ENCODE measurements at regions of chr1 and their contacts with region 1.

Region 1: GRCh38 chr1:114282751-114283403 is 129.2 kb upstream of the SYT6 start:
- DNase-seq: peak; percentile 90
- ATAC-seq: peak; percentile 100
- H3K4me3 Mint-ChIP-seq: no peak overlapping the region
- H3K27ac Mint-ChIP-seq: no peak overlapping the region
- H3K4me1 Mint-ChIP-seq: no peaks in the 10 kb centered on the region
- H3K27me3 Mint-ChIP-seq: peaks cover 3% of the 10 kb centered on the region

Region 2: GRCh38 chr1:113978863-113979702 is 303.8 kb before region 1 on chr1 and contains the start of gene OLFML3:
- CTCF ChIA-PET with region 1: interaction called, 40 read pairs
- DNase-seq: peak; percentile 76
- ATAC-seq: no peak
- H3K4me3 Mint-ChIP-seq: no peak within 1 kb of the TSS
- H3K27ac Mint-ChIP-seq: no peak within 1 kb of the TSS
- H3K4me1 Mint-ChIP-seq: peaks cover 46% of the 10 kb centered on the region
- H3K27me3 Mint-ChIP-seq: no peaks in the 10 kb centered on the region
- total RNA-seq, gene OLFML3: 0.26 to 0.29 TPM

Region 3: GRCh38 chr1:114263343-114263742 is 19.5 kb before region 1 on chr1:
- CTCF ChIA-PET with region 1: interaction called, 13 read pairs
- DNase-seq: no peak
- ATAC-seq: peak; percentile 39
- H3K4me3 Mint-ChIP-seq: no peak overlapping the region
- H3K27ac Mint-ChIP-seq: no peak overlapping the region
- H3K4me1 Mint-ChIP-seq: no peaks in the 10 kb centered on the region
- H3K27me3 Mint-ChIP-seq: no peaks in the 10 kb centered on the region

Region 4: GRCh38 chr1:114272593-114272992 is 10.3 kb before region 1 on chr1:
- CTCF ChIA-PET with region 1: interaction called, 19 read pairs
- DNase-seq: no peak
- ATAC-seq: no peak
- H3K4me3 Mint-ChIP-seq: no peak overlapping the region
- H3K27ac Mint-ChIP-seq: no peak overlapping the region
- H3K4me1 Mint-ChIP-seq: peaks cover 4% of the 10 kb centered on the region
- H3K27me3 Mint-ChIP-seq: peaks cover 26% of the 10 kb centered on the region

Region 5: GRCh38 chr1:114295321-114295720 is 12.4 kb after region 1 on chr1:
- CTCF ChIA-PET with region 1: interaction called, 12 read pairs
- DNase-seq: no peak
- ATAC-seq: no peak
- H3K4me3 Mint-ChIP-seq: no peak overlapping the region
- H3K27ac Mint-ChIP-seq: no peak overlapping the region
- H3K4me1 Mint-ChIP-seq: no peaks in the 10 kb centered on the region
- H3K27me3 Mint-ChIP-seq: peaks cover 8% of the 10 kb centered on the region

Region 6: DNA sequence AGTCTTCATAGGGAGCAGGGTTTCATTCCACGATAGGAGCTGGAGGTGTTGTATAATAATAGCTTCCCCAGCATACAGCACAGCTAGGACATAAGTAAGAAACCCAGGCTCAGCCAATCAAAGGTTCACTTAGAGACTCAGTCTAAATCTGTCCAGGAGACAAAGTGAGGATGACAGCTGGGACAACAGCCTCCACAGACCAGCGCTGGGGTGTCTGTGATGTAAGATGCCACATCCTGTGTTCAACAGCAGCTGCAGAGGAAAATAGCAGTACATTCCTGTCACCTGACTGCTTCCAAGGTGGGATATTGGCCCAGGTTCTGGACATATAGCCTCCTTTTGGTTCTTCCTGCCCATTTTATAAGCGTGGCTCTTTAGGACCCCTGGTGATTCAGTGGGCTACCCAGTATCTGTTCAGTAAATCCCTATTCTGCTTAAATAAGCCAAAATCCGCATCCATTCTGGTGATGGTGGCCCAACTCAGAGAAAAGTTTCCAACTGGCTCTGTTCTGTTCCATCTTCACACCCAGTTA is 47.6 kb after region 1 on chr1:
- CTCF ChIA-PET with region 1: interaction called, 11 read pairs
- DNase-seq: peak; percentile 78
- ATAC-seq: peak; percentile 84
- H3K4me3 Mint-ChIP-seq: no peak overlapping the region
- H3K27ac Mint-ChIP-seq: peak overlapping the region; percentile 6
- H3K4me1 Mint-ChIP-seq: peaks cover 58% of the 10 kb centered on the region
- H3K27me3 Mint-ChIP-seq: peaks cover 6% of the 10 kb centered on the region

Region 7: GRCh38 chr1:114346480-114347029 is 63.7 kb after region 1 on chr1:
- CTCF ChIA-PET with region 1: interaction called, 16 read pairs
- DNase-seq: peak; percentile 97
- ATAC-seq: peak; percentile 98
- H3K4me3 Mint-ChIP-seq: peak overlapping the region; percentile 70
- H3K27ac Mint-ChIP-seq: peak overlapping the region; percentile 96
- H3K4me1 Mint-ChIP-seq: peaks cover 39% of the 10 kb centered on the region
- H3K27me3 Mint-ChIP-seq: no peaks in the 10 kb centered on the region

Region 8: DNA sequence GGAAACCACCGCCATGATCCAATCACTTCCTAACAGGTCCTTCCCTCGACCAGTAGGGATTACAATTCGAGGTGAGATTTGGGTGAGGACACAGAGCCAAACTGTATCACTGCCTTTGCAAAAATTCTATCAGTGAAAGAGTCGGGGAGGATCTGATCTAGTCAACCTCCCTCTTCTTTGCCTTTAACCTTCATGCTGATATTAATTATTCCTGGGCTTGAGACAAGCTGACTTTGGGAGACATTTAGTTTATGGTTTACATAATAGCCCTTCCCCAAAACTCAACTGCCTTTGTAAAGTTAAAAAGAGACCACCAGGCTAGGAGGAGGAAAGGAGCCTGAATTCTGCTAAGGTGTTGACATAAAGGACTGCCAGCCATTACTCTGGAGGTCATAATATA is 135.4 kb after region 1 on chr1:
- CTCF ChIA-PET with region 1: no interaction called
- DNase-seq: no peak
- ATAC-seq: no peak
- H3K4me3 Mint-ChIP-seq: no peak overlapping the region
- H3K27ac Mint-ChIP-seq: no peak overlapping the region
- H3K4me1 Mint-ChIP-seq: no peaks in the 10 kb centered on the region
- H3K27me3 Mint-ChIP-seq: no peaks in the 10 kb centered on the region

Measured in activated CD8-positive, alpha-beta memory T cell treated with anti-CD3 and anti-CD28 coated beads, Interleukin-2, amount 10 ng/mL, durations not matched to agents 7 days and 5 days (primary cell).